ENCODE measurements at regions of chr14 and their contacts with region 1.

Region 1: GRCh38 chr14:95431199-95432143 is 85.0 kb downstream of the SYNE3 start:
- DNase-seq: no peak
- ATAC-seq: peak in 3 of 4 donors; percentile 41 to 67 (median 49)
- H3K4me3 ChIP-seq: no peak overlapping the region
- H3K27ac ChIP-seq: no peak overlapping the region
- H3K4me1 ChIP-seq: peaks cover 3% of the 10 kb centered on the region
- H3K27me3 ChIP-seq: no peaks in the 10 kb centered on the region
- CTCF ChIP-seq: peak; percentile 34

Region 2: DNA sequence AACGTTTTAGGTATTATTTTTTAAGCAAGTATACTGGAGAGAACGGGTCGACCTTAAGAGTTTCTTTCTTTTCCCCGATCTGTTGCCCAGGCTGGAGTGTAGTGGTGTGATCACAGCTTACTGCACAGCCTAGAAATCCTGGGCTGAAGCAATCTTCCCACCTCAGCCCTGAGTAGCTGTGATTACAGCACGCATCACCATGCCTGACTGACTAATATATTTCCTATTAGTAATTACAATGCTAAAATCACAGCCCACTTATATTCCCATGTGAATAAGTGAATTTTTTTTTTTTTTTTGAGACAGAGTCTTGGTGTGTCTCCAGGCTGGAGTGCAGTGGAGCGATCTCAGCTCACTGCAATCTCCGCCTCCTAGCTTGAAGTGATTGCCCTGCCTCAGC is 324.5 kb before region 1 on chr14:
- intact Hi-C with region 1: loop called in 1 of 2 experiments (anchors 10 kb)
- DNase-seq: no peak
- ATAC-seq: no peak
- H3K4me3 ChIP-seq: no peak overlapping the region
- H3K27ac ChIP-seq: no peak overlapping the region
- H3K4me1 ChIP-seq: no peaks in the 10 kb centered on the region
- H3K27me3 ChIP-seq: no peaks in the 10 kb centered on the region
- CTCF ChIP-seq: no peak

Region 3: GRCh38 chr14:95163132-95163531 is 268.3 kb before region 1 on chr14:
- intact Hi-C with region 1: loop called in 1 of 2 experiments (anchors 10 kb)
- DNase-seq: no peak
- ATAC-seq: no peak
- H3K4me3 ChIP-seq: no peak overlapping the region
- H3K27ac ChIP-seq: no peak overlapping the region
- H3K4me1 ChIP-seq: peaks cover 3% of the 10 kb centered on the region
- H3K27me3 ChIP-seq: no peaks in the 10 kb centered on the region
- CTCF ChIP-seq: no peak

Region 4: GRCh38 chr14:95683793-95684192 is 252.3 kb after region 1 on chr14:
- intact Hi-C with region 1: loop called in 1 of 2 experiments (anchors 5 kb)
- DNase-seq: no peak
- ATAC-seq: peak in 2 of 4 donors; percentile 54 to 59
- H3K4me3 ChIP-seq: no peak overlapping the region
- H3K27ac ChIP-seq: no peak overlapping the region
- H3K4me1 ChIP-seq: no peaks in the 10 kb centered on the region
- H3K27me3 ChIP-seq: peaks cover 0 to 3% (median 0%) of the 10 kb centered on the region in 3 donors
- CTCF ChIP-seq: peak; percentile 52